Ascending aorta (tissue), 2 donors: ENCODE measurements at regions of chr12 and their contacts with region 1.

Region 1: DNA sequence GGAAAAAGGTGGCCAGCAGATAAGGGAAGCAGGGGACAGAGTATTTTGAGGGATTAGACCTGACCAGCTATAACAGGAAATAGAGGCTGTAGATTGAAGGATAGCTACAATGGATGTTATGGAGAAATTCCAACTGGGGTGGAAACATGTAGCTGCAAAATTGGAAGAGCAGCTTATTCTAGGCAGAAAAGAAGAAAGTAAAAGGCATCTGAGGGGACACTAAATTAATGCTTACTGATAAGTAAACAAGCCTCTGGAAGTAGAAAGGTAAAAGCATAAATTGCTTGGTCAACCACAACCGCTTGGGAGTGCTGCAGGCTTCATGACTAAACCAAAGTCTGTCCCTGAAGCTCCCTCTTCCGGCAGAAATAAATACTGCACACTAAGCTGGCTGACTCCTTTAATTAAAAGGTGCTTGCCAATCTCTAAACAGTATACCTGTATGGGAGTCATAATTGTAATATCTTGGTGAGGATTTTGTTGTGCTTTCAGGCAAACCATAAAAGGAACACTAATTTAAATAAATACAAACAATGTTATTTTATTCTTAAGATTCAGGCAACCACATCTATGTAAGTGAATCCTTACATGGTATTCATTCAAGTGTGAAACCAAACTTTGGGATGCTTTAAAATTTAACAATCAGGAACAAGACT is 7.7 kb downstream of the UBC start:
- DNase-seq: peak; percentile 55 to 95
- H3K4me3 ChIP-seq: no peak overlapping the region
- H3K27ac ChIP-seq: no peak overlapping the region
- H3K4me1 ChIP-seq: peaks cover 0 to 30% of the 10 kb centered on the region in 2 donors
- H3K27me3 ChIP-seq: no peaks in the 10 kb centered on the region
- CTCF ChIP-seq: peak; percentile 95 to 98 (median 96)

Region 2: DNA sequence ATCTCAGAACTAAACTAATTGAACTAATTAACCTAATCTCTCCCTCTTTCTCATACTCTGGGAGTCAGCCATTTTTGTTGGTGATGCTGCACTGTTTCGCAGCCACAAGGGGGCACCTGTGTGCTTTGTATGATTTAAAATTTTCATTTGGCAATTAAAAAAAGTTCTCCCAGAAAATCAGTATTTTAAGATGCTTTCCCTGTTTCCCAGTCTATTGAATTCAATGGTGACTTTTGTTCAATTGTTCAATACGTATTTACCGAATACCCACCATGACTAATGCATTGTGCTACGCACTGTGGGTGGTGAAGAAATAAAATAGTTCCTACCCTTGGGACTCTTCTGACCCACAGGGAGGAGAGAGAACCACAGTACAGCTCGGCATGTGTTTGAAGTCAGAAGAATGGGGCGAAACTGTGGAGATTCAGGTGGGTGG is 870.0 kb before region 1 on chr12:
- intact Hi-C with region 1: loop called (anchors 10 kb)
- DNase-seq: no peak
- H3K4me3 ChIP-seq: no peak overlapping the region
- H3K27ac ChIP-seq: no peak overlapping the region
- H3K4me1 ChIP-seq: no peaks in the 10 kb centered on the region
- H3K27me3 ChIP-seq: no peaks in the 10 kb centered on the region
- CTCF ChIP-seq: peak; percentile 85 to 88 (median 85)

Region 3: GRCh38 chr12:124369055-124369900 is 537.5 kb before region 1 on chr12:
- intact Hi-C with region 1: loop called (anchors 5 kb)
- DNase-seq: peak; percentile 61 to 95
- H3K4me3 ChIP-seq: peak overlapping the region in 1 of 2 donors; percentile 37
- H3K27ac ChIP-seq: peak overlapping the region; percentile 83 to 87
- H3K4me1 ChIP-seq: peaks cover 26 to 34% of the 10 kb centered on the region in 2 donors
- H3K27me3 ChIP-seq: no peaks in the 10 kb centered on the region
- CTCF ChIP-seq: peak; percentile 46 to 73 (median 49)

Region 4: GRCh38 chr12:124863416-124864325 is 43.1 kb before region 1 on chr12 and contains the start of gene SCARB1:
- intact Hi-C with region 1: loop called (anchors 5 kb)
- DNase-seq: peak; percentile 39 to 90
- H3K4me3 ChIP-seq: peak within 1 kb of the TSS; percentile 82 to 83
- H3K27ac ChIP-seq: peak within 1 kb of the TSS; percentile 36 to 61
- H3K4me1 ChIP-seq: peaks cover 0 to 7% of the 10 kb centered on the region in 2 donors
- H3K27me3 ChIP-seq: no peaks in the 10 kb centered on the region
- CTCF ChIP-seq: no peak
- total RNA-seq, gene SCARB1: 81.1 TPM

Region 5: DNA sequence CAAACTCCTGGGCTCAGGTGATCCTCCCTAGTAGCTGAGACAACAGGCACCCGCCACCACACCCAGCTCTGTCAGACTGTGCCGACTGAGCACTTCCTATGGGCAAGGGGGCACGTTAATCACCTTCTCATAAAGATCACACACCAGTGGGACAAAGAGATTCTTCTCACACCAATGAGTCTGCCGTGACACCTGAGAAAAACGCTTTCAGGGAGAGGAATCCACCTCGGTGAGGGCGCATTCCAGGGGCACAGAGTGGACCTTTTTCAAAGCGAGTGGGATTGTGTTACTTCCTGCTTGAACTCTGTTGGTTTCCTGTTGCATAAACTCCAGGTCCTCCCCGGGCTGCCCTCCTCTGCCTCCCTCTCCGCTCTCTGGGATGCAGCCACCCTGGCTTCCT is 25.6 kb before region 1 on chr12:
- intact Hi-C with region 1: no loop called
- DNase-seq: no peak
- H3K4me3 ChIP-seq: no peak overlapping the region
- H3K27ac ChIP-seq: no peak overlapping the region
- H3K4me1 ChIP-seq: no peaks in the 10 kb centered on the region
- H3K27me3 ChIP-seq: no peaks in the 10 kb centered on the region
- CTCF ChIP-seq: no peak

Region 6: GRCh38 chr12:124940549-124941527 is 34.1 kb after region 1 on chr12:
- intact Hi-C with region 1: loop called (anchors 1 kb)
- DNase-seq: peak; percentile 75 to 92
- H3K4me3 ChIP-seq: peak overlapping the region; percentile 48 to 65
- H3K27ac ChIP-seq: peak overlapping the region; percentile 83 to 92
- H3K4me1 ChIP-seq: peaks cover 0 to 15% of the 10 kb centered on the region in 2 donors
- H3K27me3 ChIP-seq: no peaks in the 10 kb centered on the region
- CTCF ChIP-seq: peak; percentile 85 to 89 (median 88)

Region 7: GRCh38 chr12:124964836-124965462 is 58.2 kb after region 1 on chr12:
- intact Hi-C with region 1: no loop called
- DNase-seq: no peak
- H3K4me3 ChIP-seq: no peak overlapping the region
- H3K27ac ChIP-seq: no peak overlapping the region
- H3K4me1 ChIP-seq: no peaks in the 10 kb centered on the region
- H3K27me3 ChIP-seq: no peaks in the 10 kb centered on the region
- CTCF ChIP-seq: no peak

Region 8: DNA sequence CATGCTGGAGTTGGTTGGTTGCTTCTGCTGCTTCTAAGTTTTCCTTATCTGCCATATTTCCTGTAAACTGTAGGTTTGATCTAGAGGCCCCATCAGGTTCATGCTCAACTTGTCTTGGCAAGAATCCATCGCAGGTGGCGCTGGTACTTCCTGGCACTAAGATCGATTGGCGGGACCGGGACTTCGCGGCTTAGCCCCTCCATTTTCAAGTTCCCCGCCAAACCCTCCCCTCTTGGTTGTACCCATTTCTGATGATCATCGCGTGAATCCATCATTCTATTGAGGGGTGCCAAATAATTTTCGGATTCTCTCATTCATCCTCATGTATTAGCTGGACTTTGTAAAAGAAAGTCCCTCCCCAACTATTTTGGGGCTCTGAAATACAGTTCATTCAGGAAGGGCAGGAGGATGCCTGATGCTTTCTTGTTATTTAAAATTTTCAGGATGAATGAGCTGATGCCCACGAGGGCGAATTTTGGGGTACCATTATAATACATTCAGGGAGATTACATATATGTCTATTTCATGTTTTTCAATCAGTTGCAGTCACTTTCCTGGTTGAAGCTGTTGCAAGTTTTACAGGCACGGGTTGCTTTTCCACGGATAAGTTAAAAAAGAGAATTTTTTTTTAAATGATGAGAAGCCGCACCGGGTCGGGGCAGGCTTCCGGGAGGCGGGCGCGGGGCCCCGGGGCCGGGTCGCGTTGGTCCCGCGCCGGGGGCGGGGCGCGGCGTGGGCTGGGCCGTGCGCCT is 86.3 kb after region 1 on chr12:
- intact Hi-C with region 1: loop called (anchors 1 kb)
- DNase-seq: no peak
- H3K4me3 ChIP-seq: peak overlapping the region; percentile 83 to 84
- H3K27ac ChIP-seq: no peak overlapping the region
- H3K4me1 ChIP-seq: peaks cover 3 to 6% of the 10 kb centered on the region in 2 donors
- H3K27me3 ChIP-seq: no peaks in the 10 kb centered on the region
- CTCF ChIP-seq: no peak

Region 9: GRCh38 chr12:125065021-125065795 is 158.5 kb after region 1 on chr12 and contains the start of gene AACS:
- intact Hi-C with region 1: loop called (anchors 10 kb)
- DNase-seq: peak in 1 of 2 donors; percentile 78
- H3K4me3 ChIP-seq: peak within 1 kb of the TSS; percentile 67 to 99
- H3K27ac ChIP-seq: peak within 1 kb of the TSS; percentile 54 to 83
- H3K4me1 ChIP-seq: peaks cover 4 to 11% of the 10 kb centered on the region in 2 donors
- H3K27me3 ChIP-seq: no peaks in the 10 kb centered on the region
- CTCF ChIP-seq: no peak
- total RNA-seq, gene AACS: 7.0 TPM